OCI-LY7 (cell line): ENCODE measurements at regions of chr1 and their contacts with region 1.

Region 1: GRCh38 chr1:209655411-209656231 is 3.4 kb upstream of the LAMB3 start:
- DNase-seq: no peak
- H3K4me3 ChIP-seq: no peak overlapping the region
- H3K27ac ChIP-seq: no peak overlapping the region
- H3K4me1 ChIP-seq: no peaks in the 10 kb centered on the region
- CTCF ChIP-seq: no peak

Region 2: DNA sequence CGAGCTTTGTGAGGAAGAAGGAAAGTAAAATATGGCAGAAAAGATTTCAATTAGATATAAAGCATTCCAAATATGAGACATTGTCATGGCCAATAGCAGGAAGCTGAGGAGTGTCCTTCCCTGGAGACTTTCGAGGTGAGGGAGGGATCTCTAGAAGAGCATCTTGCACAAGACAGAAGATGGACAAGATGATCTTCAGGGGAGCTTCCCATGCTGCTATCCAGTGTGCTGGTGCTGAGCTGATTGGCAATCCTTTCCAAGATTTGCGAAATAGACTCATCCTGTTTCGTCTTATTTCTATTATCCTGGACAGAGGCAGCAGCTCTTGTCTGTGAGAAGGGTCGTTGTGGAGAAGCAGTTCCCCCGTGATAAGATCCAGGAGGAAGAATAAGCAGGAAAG is 414.1 kb before region 1 on chr1:
- CTCF ChIA-PET with region 1: no interaction called
- POLR2A ChIA-PET with region 1: no interaction called
- intact Hi-C with region 1: no loop called
- DNase-seq: no peak
- H3K4me3 ChIP-seq: no peak overlapping the region
- H3K27ac ChIP-seq: no peak overlapping the region
- H3K4me1 ChIP-seq: no peaks in the 10 kb centered on the region
- CTCF ChIP-seq: no peak

Region 3: DNA sequence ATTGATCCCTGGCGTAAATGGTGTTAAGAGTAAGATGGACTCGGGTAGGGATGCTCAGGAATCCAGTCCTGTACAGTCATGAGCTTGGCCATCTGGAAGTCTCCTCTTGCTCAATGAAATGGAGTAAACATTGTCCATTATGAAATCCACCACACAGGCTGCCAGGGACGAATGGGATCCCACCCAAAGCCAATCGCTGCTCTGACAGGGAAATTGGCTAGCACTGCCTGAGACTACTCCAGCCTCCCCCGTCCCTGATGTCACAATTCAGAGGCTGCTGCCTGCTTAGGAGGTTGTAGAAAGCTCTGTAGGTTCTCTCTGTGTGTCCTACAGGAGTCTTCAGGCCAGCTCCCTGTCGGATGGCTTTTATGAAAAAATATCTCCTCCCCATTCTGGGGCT is 49.0 kb after region 1 on chr1 and contains the start of gene HSD11B1:
- CTCF ChIA-PET with region 1: no interaction called
- POLR2A ChIA-PET with region 1: no interaction called
- intact Hi-C with region 1: loop called (anchors 1 kb)
- DNase-seq: no peak
- H3K4me3 ChIP-seq: no peak within 1 kb of the TSS
- H3K27ac ChIP-seq: no peak within 1 kb of the TSS
- H3K4me1 ChIP-seq: no peaks in the 10 kb centered on the region
- CTCF ChIP-seq: no peak
- total RNA-seq, gene HSD11B1: not detected in 2 replicates